ENCODE measurements at regions of chr7 and their contacts with region 1.

Region 1: DNA sequence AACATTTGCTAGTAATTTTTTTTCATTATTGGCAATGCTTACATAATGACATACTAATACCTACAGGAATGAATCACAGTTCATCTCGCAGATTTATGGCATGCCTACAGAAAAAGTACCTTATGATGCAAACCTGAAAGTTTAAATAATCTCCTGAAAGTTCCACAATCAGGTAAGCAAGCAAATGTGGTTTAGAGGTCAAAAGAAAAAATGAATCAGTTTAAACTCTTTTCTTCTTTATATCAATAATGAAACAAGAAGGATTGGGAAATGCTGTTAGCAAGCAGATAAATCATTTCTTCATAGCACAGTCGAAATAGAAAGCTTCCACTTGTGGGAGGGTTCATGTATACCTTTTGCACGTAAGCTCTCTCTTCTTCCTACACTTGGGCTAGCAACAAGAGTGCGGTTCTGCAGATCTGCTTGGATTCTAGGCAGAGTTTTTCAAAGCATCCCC is 53.7 kb upstream of the MTPN start:
- DNase-seq: no peak
- ATAC-seq: no peak
- H3K4me3 ChIP-seq: no peak overlapping the region
- H3K27ac ChIP-seq: peak overlapping the region in 1 of 12 donors; percentile 86
- H3K4me1 ChIP-seq: peaks cover 0 to 18% (median 4%) of the 10 kb centered on the region in 12 donors
- H3K27me3 ChIP-seq: no peaks in the 10 kb centered on the region
- CTCF ChIP-seq: no peak
- POLR2A ChIP-seq: no peak

Region 2: GRCh38 chr7:135911099-135911498 is 119.8 kb before region 1 on chr7:
- intact Hi-C with region 1: no loop called
- DNase-seq: peak in 4 of 5 donors; percentile 26 to 63 (median 41)
- ATAC-seq: peak in 3 of 4 donors; percentile 20 to 34 (median 29)
- H3K4me3 ChIP-seq: peak overlapping the region in 1 of 12 donors; percentile 5
- H3K27ac ChIP-seq: peak overlapping the region in 4 of 12 donors; percentile 4 to 37 (median 10)
- H3K4me1 ChIP-seq: peaks cover 0 to 24% (median 5%) of the 10 kb centered on the region in 12 donors
- H3K27me3 ChIP-seq: no peaks in the 10 kb centered on the region
- CTCF ChIP-seq: no peak
- POLR2A ChIP-seq: no peak

Region 3: DNA sequence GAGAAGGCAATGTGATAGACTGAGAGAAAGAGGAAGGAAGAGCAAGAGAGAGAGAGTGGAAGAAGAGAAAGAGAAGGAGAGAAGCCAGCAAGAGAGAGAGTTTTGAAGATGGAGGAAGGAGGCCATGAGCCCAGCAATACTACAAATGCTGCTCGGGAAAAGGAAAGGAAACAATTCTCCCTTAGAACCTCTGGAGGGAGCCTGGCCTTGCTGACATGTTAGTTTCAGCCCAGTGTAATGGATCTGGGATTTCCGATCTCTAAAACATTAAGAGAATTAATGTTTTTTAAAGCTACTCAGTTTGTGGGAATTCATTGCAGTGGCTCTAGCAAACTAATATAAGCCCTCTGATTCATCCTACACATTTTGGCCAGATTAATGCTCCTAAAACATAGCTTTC is 153.1 kb after region 1 on chr7:
- intact Hi-C with region 1: loop called in 1 of 10 experiments (anchors 10 kb)
- DNase-seq: no peak
- ATAC-seq: no peak
- H3K4me3 ChIP-seq: no peak overlapping the region
- H3K27ac ChIP-seq: peak overlapping the region in 1 of 12 donors; percentile 27
- H3K4me1 ChIP-seq: peaks cover 0 to 11% (median 0%) of the 10 kb centered on the region in 12 donors
- H3K27me3 ChIP-seq: no peaks in the 10 kb centered on the region
- CTCF ChIP-seq: peak in 5 of 12 donors; percentile 6 to 31 (median 18)
- POLR2A ChIP-seq: no peak

Region 4: GRCh38 chr7:136348542-136349192 is 317.8 kb after region 1 on chr7:
- intact Hi-C with region 1: loop called in 1 of 10 experiments (anchors 2 kb)
- DNase-seq: peak; percentile 36 to 87 (median 64)
- ATAC-seq: peak; percentile 94 to 98 (median 97)
- H3K4me3 ChIP-seq: no peak overlapping the region
- H3K27ac ChIP-seq: peak overlapping the region in 6 of 12 donors; percentile 12 to 70 (median 42)
- H3K4me1 ChIP-seq: peaks cover 0 to 7% (median 0%) of the 10 kb centered on the region in 12 donors
- H3K27me3 ChIP-seq: no peaks in the 10 kb centered on the region
- CTCF ChIP-seq: no peak
- POLR2A ChIP-seq: no peak